ENCODE measurements at regions of chr1 and their contacts with region 1.

Region 1: DNA sequence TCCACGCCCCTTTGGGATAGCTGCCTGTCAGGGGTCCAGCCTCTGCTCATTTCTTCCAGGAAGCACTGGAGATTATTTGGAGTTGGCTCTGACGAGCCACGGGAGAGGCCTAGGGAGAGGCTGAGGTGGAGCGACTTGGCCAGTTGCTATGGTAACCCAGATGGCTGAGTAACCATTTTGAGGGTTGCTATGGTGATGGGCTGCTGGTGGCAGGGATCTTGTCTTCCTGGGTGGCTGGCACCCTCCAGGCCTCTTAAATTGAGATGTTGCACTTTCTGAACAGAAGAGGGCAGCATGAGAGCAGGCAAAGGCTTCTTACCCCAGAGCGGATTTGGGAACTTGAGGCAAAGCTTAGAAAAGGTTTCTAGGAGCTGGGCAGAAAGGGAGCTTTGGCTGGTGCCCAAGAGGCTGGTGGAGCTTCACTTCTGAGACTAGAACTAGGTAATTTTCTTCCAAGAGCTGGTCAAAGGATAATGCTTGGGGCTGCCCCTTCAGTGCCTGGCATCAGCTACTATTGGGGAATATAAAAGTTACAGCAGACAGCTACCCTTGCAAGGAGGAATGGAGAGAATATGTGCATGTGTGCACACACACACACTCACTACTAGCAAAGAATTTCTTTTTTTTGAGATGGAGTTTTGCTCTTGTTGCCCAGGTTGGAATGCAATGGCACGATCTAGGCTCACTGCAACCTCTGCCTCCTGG is 72.5 kb downstream of the NDUFS5 start:
- DNase-seq: peak; percentile 88
- H3K4me3 ChIP-seq: no peak overlapping the region
- H3K27ac ChIP-seq: peak overlapping the region; percentile 24
- H3K4me1 ChIP-seq: peaks cover 20% of the 10 kb centered on the region
- H3K27me3 ChIP-seq: no peaks in the 10 kb centered on the region
- CTCF ChIP-seq: peak; percentile 82 to 86

Region 2: DNA sequence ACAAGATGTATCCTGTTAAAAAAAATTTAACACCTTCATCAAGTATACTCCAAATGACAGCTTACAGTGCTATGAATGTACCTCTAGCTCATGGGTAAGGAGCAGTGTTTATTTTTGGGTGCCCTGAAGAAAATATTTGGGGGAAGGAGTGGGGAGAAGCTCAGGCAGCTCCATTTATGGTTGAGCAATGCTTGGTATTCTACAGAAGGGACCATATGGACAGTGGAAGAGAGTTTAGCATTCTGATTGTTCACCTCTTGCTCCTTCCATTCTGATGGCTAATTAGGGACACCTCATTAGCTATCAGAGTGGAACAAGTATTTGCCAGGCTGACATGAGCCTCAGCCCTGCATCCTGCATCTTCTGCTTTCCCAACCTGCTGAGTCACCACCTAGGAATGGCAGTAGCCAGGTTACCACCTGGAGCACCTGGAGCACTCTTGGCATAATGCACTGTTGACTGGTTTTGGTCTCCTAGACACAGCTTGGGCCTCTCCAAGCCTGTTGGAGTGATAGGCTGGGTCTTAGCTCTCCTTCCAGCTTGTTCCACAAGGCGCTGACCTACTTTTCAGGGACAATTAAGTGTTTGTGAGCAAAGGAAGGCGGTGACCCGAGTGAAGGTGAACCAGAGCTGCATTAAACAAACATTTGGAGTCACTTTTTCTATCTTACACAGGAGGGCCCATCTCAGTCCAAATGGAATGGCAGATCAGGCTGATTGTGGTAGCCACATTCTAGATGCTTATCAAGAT is 43.9 kb after region 1 on chr1:
- CTCF ChIA-PET with region 1: no interaction called
- dilution Hi-C with region 1: no loop called
- in situ Hi-C with region 1: no loop called
- intact Hi-C with region 1: loop called (anchors 1 kb)
- DNase-seq: peak; percentile 97
- H3K4me3 ChIP-seq: no peak overlapping the region
- H3K27ac ChIP-seq: peak overlapping the region; percentile 84
- H3K4me1 ChIP-seq: peaks cover 50% of the 10 kb centered on the region
- H3K27me3 ChIP-seq: no peaks in the 10 kb centered on the region
- CTCF ChIP-seq: peak; percentile 7 to 14

Region 3: GRCh38 chr1:39196244-39197215 is 97.8 kb after region 1 on chr1:
- CTCF ChIA-PET with region 1: interaction called, 7 read pairs
- dilution Hi-C with region 1: loop called (anchors 5 kb)
- in situ Hi-C with region 1: no loop called
- intact Hi-C with region 1: loop called (anchors 1 kb)
- DNase-seq: peak; percentile 76
- H3K4me3 ChIP-seq: no peak overlapping the region
- H3K27ac ChIP-seq: peak overlapping the region; percentile 69
- H3K4me1 ChIP-seq: peaks cover 53% of the 10 kb centered on the region
- H3K27me3 ChIP-seq: no peaks in the 10 kb centered on the region
- CTCF ChIP-seq: no peak

Region 4: DNA sequence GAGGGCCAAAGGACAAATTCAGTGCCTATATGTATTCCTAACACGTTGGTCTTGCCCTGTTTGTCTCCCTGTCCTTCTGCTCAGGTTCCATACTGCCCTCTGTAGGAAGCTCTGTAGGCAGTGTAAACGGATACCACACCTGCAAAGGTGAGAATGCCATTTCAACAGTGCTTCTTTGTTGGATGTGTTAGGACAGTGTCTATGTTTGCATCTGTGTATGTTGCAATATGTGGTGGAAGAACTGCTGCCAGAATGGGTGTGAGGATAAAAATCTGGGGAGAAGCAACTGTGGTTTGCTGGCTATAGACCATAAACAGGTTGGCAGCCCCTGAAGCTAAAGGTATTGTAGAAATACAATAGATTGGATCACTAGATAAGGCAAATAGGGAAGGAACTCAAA is 279.7 kb after region 1 on chr1:
- CTCF ChIA-PET with region 1: no interaction called
- dilution Hi-C with region 1: no loop called
- in situ Hi-C with region 1: no loop called
- intact Hi-C with region 1: loop called (anchors 1 kb)
- DNase-seq: peak; percentile 95
- H3K4me3 ChIP-seq: no peak overlapping the region
- H3K27ac ChIP-seq: peak overlapping the region; percentile 45
- H3K4me1 ChIP-seq: peaks cover 15% of the 10 kb centered on the region
- H3K27me3 ChIP-seq: no peaks in the 10 kb centered on the region
- CTCF ChIP-seq: peak; percentile 91

Region 5: DNA sequence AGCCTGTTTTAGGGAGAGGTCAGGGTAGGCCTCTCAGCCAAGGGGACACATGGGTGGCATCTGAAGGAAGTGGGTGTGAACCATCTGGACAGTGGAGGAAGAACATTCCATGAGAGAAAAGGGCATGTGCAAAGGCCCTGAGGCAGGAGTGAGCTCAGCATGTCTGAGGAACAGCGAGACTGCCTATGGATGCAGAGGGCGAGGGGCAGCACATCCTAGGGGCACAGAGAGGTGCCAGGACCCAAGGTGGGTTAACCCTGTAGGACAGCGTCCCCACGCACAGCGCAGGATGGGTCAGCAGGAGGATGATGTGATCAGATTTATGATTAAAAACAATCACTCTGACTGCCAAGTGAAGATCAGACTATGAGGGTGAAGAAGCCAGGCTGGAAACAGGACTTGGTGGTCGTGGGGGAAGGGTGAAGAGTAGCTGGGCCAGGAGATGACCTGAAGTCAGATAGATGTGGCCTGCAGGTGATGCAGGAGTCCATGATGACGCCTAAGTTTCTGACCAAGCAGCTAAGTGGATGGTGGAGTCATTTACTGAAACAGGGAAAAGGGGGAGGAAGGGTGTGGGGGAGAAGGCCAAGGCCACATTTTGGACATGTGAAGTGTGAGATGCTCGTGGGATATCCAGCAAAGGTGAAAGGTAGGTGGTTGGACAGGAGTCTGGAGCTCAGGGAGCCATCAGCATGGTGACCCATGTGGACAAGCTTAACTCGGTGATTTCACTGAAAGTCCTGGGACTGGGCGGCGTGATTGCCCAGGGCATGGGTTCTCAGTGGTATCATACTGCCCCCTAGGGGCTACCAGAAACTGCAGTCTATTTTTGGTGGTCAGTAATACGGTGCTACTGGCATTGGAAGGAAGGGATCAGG is 440.1 kb after region 1 on chr1:
- CTCF ChIA-PET with region 1: interaction called, 10 read pairs
- dilution Hi-C with region 1: loop called (anchors 25 kb)
- in situ Hi-C with region 1: loop called (anchors 10 to 25 kb)
- intact Hi-C with region 1: loop called (anchors 1 kb)
- DNase-seq: peak; percentile 45
- H3K4me3 ChIP-seq: no peak overlapping the region
- H3K27ac ChIP-seq: no peak overlapping the region
- H3K4me1 ChIP-seq: no peaks in the 10 kb centered on the region
- H3K27me3 ChIP-seq: no peaks in the 10 kb centered on the region
- CTCF ChIP-seq: peak; percentile 88

Region 6: GRCh38 chr1:39720094-39720999 is 621.6 kb after region 1 on chr1:
- CTCF ChIA-PET with region 1: interaction called, 3 read pairs
- dilution Hi-C with region 1: no loop called
- in situ Hi-C with region 1: no loop called
- intact Hi-C with region 1: loop called (anchors 1 kb)
- DNase-seq: peak; percentile 44
- H3K4me3 ChIP-seq: no peak overlapping the region
- H3K27ac ChIP-seq: no peak overlapping the region
- H3K4me1 ChIP-seq: peaks cover 2% of the 10 kb centered on the region
- H3K27me3 ChIP-seq: no peaks in the 10 kb centered on the region
- CTCF ChIP-seq: peak; percentile 56 to 66

Measured in mammary epithelial cell (primary cell).